ENCODE measurements at regions of chr10 and their contacts with region 1.

Region 1: GRCh38 chr10:26881600-26882331 is 21.0 kb upstream of the ABI1 start:
- DNase-seq: no peak
- H3K4me3 Mint-ChIP-seq: no peak overlapping the region
- H3K27ac Mint-ChIP-seq: no peak overlapping the region
- H3K4me1 Mint-ChIP-seq: peaks cover 2% of the 10 kb centered on the region
- H3K27me3 Mint-ChIP-seq: peaks cover 5% of the 10 kb centered on the region

Region 2: GRCh38 chr10:25725918-25726716 is 1155.6 kb before region 1 on chr10:
- CTCF ChIA-PET with region 1: no interaction called
- intact Hi-C with region 1: loop called (anchors 5 kb)
- DNase-seq: peak; percentile 43
- H3K4me3 Mint-ChIP-seq: no peak overlapping the region
- H3K27ac Mint-ChIP-seq: no peak overlapping the region
- H3K4me1 Mint-ChIP-seq: no peaks in the 10 kb centered on the region
- H3K27me3 Mint-ChIP-seq: peaks cover 25% of the 10 kb centered on the region

Region 3: GRCh38 chr10:25875556-25876165 is 1006.1 kb before region 1 on chr10:
- CTCF ChIA-PET with region 1: interaction called, 3 read pairs
- intact Hi-C with region 1: loop called (anchors 2 kb)
- DNase-seq: peak; percentile 85
- H3K4me3 Mint-ChIP-seq: no peak overlapping the region
- H3K27ac Mint-ChIP-seq: no peak overlapping the region
- H3K4me1 Mint-ChIP-seq: no peaks in the 10 kb centered on the region
- H3K27me3 Mint-ChIP-seq: peaks cover 4% of the 10 kb centered on the region

Region 4: GRCh38 chr10:26334932-26335573 is 546.7 kb before region 1 on chr10:
- CTCF ChIA-PET with region 1: interaction called, 8 read pairs
- intact Hi-C with region 1: loop called (anchors 1 kb)
- DNase-seq: peak; percentile 76
- H3K4me3 Mint-ChIP-seq: peak overlapping the region; percentile 71
- H3K27ac Mint-ChIP-seq: peak overlapping the region; percentile 48
- H3K4me1 Mint-ChIP-seq: peaks cover 8% of the 10 kb centered on the region
- H3K27me3 Mint-ChIP-seq: no peaks in the 10 kb centered on the region

Region 5: DNA sequence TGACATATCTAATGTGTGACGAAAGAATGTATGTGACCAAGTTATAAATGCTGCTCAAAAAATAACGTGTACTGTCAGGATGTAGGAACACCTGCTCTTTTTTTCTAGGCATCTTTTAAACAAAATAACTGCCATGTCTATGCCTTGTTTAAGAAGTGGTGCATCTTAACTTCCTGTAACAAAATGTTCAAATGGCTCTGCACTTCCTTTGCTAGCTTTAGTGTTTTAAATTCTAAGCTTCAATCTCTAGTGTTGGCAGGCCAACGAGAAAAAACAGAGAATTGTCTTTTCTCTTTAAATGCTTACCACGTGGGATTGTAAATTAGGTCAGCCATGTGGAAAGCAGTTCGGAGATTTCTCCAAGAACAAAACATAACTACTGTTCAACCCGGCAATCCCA is 198.8 kb before region 1 on chr10:
- CTCF ChIA-PET with region 1: interaction called, 3 read pairs
- intact Hi-C with region 1: loop called (anchors 2 kb)
- DNase-seq: no peak
- H3K4me3 Mint-ChIP-seq: no peak overlapping the region
- H3K27ac Mint-ChIP-seq: peak overlapping the region; percentile 56
- H3K4me1 Mint-ChIP-seq: peaks cover 23% of the 10 kb centered on the region
- H3K27me3 Mint-ChIP-seq: no peaks in the 10 kb centered on the region

Region 6: DNA sequence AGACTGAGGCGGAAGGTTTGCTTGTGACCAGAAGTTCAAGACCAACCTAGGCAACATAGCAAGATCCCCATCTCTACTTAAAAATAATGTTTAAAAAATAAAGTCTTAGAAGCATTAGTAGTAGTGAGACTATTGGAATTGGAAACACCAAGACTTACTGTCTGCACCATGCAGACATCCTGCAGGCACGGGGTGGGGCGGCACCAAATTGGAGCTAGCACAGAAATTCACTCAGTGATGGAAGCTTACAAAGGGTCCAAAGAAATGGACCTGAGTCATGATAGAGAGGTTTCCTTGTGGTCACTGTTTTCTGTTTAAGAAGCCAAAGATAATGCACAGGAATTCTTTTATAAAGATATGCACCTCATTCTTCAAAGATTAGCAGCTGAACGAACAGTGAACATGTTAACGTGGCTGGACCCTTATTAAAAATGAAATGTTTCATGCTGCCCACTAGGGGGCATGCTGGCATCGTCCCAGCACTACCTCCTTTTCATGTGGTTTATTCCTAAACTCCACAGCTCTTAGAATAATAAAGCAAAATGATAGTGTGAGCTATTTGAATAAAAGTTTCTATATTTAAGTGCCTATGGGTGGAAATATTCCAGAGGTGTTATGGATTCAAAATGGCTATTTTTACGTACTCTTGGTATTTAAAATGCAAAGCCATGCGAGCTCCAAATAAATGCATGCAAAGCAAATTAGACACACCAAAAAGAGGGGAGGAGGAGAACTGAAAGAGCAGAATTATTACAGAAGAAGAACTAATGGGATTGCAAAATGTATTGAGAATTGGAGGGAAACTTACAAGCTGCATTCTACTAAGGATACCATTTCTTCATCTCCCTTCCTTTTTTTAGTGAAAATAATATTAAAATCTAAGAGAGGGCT is 155.7 kb before region 1 on chr10:
- CTCF ChIA-PET with region 1: interaction called, 145 read pairs
- intact Hi-C with region 1: loop called (anchors 1 kb)
- DNase-seq: peak; percentile 51
- H3K4me3 Mint-ChIP-seq: no peak overlapping the region
- H3K27ac Mint-ChIP-seq: no peak overlapping the region
- H3K4me1 Mint-ChIP-seq: no peaks in the 10 kb centered on the region
- H3K27me3 Mint-ChIP-seq: no peaks in the 10 kb centered on the region

Region 7: GRCh38 chr10:26869528-26869927 is 12.2 kb before region 1 on chr10:
- CTCF ChIA-PET with region 1: interaction called, 13 read pairs
- intact Hi-C with region 1: no loop called
- DNase-seq: peak; percentile 38
- H3K4me3 Mint-ChIP-seq: no peak overlapping the region
- H3K27ac Mint-ChIP-seq: no peak overlapping the region
- H3K4me1 Mint-ChIP-seq: peaks cover 6% of the 10 kb centered on the region
- H3K27me3 Mint-ChIP-seq: no peaks in the 10 kb centered on the region

Region 8: DNA sequence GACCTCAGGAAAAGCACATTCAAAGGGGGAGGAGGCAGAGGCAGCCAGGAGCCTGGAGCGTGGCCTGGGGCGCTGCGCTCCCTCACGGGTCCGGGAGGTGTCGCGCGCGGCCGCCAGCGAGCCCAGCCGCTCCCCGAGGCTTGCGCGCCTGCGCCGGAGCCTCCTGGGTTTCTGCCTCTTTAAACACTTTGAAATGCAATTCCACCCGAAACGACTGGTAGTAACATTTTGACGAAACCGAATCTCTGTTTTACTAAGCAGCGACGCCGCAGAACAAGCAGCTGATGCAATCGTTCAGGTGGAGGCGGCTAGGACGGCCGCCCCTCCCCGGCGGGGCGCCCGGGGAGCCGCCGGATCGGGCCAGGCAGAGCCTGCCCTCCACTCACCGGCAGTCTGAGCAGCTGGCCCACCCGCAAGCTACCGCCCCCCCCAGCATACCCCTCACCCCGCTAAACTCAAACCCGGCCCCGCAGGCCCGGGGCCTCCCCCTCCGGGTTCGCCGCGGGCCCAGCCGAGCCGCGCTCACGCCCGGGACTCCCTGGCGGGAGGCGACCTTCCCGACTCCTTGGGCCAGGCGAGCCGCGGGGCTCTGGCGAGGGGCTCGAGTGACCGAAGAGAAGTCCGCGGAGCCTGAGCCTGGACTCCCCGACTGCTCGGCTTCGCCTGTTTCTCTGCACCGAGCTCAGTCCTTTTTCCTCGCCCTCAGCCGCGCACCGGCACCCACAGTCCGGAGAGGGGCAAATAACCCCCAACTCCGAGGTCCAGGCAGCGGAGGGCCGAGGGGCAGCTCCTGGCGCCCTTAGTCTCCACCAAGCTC is 860.6 kb after region 1 on chr10:
- CTCF ChIA-PET with region 1: no interaction called
- intact Hi-C with region 1: no loop called
- DNase-seq: peak; percentile 88
- H3K4me3 Mint-ChIP-seq: peak overlapping the region; percentile 68
- H3K27ac Mint-ChIP-seq: no peak overlapping the region
- H3K4me1 Mint-ChIP-seq: peaks cover 31% of the 10 kb centered on the region
- H3K27me3 Mint-ChIP-seq: peaks cover 49% of the 10 kb centered on the region